ENCODE measurements at regions of chr2 and their contacts with region 1.

Region 1: DNA sequence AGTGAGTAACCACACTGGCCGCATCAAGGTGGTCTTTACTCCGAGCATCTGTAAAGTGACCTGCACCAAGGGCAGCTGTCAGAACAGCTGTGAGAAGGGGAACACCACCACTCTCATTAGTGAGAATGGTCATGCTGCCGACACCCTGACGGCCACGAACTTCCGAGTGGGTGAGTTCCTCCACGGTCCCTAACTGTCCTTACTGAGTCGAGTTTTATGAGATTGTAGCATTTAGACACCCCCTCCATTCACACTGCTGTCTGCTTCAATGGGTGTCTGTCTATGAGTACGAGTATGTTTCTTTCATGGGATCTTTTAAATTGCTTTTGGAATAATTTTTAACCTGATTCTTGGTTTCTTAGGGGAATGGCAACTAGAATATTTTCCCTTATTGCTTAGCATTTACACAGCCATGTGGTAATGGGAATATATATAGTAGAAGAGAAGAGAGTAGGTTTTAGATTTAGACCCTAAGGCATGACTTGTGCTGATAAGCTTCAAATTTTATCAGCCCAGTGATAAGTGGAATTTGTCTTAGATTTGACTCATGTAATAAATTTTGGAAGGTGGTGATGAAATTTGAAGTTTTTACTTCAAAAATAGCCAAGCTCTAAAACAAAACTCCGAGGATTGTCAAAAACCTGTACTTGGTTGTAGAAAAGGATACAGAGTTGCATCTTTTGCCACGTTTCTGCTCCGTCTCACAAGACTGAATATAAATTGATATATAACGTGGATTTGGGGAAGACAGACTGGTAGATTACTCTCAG is 188.2 kb downstream of the LTBP1 start:
- DNase-seq: peak in 3 of 5 donors; percentile 21 to 41 (median 36)
- ATAC-seq: peak; percentile 17 to 53 (median 33)
- H3K4me3 ChIP-seq: peak overlapping the region in 11 of 12 donors; percentile 4 to 61 (median 47)
- H3K27ac ChIP-seq: peak overlapping the region; percentile 28 to 93 (median 82)
- H3K4me1 ChIP-seq: peaks cover 0 to 67% (median 40%) of the 10 kb centered on the region in 12 donors
- H3K27me3 ChIP-seq: no peaks in the 10 kb centered on the region
- CTCF ChIP-seq: no peak
- POLR2A ChIP-seq: no peak

Region 2: DNA sequence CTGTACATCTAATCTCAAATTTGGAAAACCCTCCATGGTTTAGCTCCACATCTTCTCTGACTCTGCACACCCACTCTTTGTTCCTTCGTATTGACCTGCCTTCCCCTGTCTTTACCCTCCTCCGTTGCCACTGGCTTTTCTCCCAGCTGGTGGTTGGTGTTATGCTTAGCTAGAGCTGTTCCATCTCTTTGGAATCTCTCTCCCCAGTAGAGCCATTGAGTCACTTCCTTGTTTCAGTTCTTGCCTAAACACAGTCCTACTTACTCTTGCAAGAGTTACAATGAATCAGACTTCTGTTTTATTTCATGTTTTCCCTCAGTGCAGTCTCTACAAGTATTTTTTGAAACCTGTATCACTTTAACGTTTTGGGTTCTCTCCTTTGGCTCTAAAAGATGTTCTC is 75.7 kb after region 1 on chr2:
- intact Hi-C with region 1: loop called in 1 of 10 experiments (anchors 5 kb)
- DNase-seq: peak in 2 of 5 donors; percentile 30 to 68
- ATAC-seq: peak; percentile 38 to 85 (median 65)
- H3K4me3 ChIP-seq: no peak overlapping the region
- H3K27ac ChIP-seq: peak overlapping the region in 8 of 12 donors; percentile 33 to 66 (median 54)
- H3K4me1 ChIP-seq: peaks cover 4 to 60% (median 33%) of the 10 kb centered on the region in 12 donors
- H3K27me3 ChIP-seq: no peaks in the 10 kb centered on the region
- CTCF ChIP-seq: no peak
- POLR2A ChIP-seq: no peak

Region 3: GRCh38 chr2:33426666-33427231 is 291.8 kb after region 1 on chr2:
- intact Hi-C with region 1: no loop called
- DNase-seq: peak in 4 of 5 donors; percentile 66 to 77 (median 73)
- ATAC-seq: peak; percentile 63 to 86 (median 82)
- H3K4me3 ChIP-seq: no peak overlapping the region
- H3K27ac ChIP-seq: no peak overlapping the region
- H3K4me1 ChIP-seq: peaks cover 0 to 7% (median 0%) of the 10 kb centered on the region in 12 donors
- H3K27me3 ChIP-seq: no peaks in the 10 kb centered on the region
- CTCF ChIP-seq: no peak
- POLR2A ChIP-seq: no peak